ENCODE measurements at regions of chr4 and their contacts with region 1.

Region 1: GRCh38 chr4:88591787-88592599 is at the start of gene HERC3:
- H3K4me3 Mint-ChIP-seq: peak within 1 kb of the TSS; percentile 85
- H3K27ac Mint-ChIP-seq: peak within 1 kb of the TSS; percentile 98
- H3K4me1 Mint-ChIP-seq: peaks cover 39% of the 10 kb centered on the region
- H3K27me3 Mint-ChIP-seq: no peaks in the 10 kb centered on the region

Region 2: GRCh38 chr4:88007304-88008121 is 584.5 kb before region 1 on chr4 and contains the start of gene PKD2:
- intact Hi-C with region 1: loop called (anchors 5 kb)
- H3K4me3 Mint-ChIP-seq: peak within 1 kb of the TSS; percentile 87
- H3K27ac Mint-ChIP-seq: peak within 1 kb of the TSS; percentile 86
- H3K4me1 Mint-ChIP-seq: peaks cover 47% of the 10 kb centered on the region
- H3K27me3 Mint-ChIP-seq: peaks cover 9% of the 10 kb centered on the region